ENCODE measurements at regions of chr6 and their contacts with region 1.

Region 1: DNA sequence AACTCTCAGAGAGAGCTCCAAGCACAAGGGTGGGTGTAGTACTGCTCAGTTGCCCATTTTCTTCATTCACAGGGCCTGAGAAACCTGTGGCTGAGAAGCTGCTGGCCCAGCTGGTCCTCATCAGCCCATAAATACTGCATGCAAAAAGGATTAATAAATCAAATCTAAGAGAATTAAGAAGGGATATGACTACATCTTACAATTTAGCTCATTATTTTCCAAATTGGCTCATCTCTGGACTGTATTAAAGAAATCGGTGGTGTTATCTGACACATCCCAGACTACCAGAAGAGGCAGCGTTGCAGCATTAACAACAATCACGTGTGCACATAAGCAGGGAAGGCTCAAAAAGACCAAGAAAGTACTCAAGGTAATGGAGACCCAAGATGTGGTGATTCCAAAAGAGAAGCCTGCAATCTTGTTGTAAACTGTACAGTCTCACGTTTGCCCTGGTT is 90.7 kb downstream of the CD24 start:
- DNase-seq: peak in 2 of 4 experiments; percentile 45 to 72
- ATAC-seq: peak; percentile 77
- H3K4me3 ChIP-seq: no peak overlapping the region
- H3K27ac ChIP-seq: peak overlapping the region; percentile 49; the same call in 2 of the 3 replicates
- H3K4me1 ChIP-seq: peaks cover 5 to 38% of the 10 kb centered on the region in 2 experiments
- H3K27me3 ChIP-seq: no peaks in the 10 kb centered on the region; a peak in 1 of 5 replicates
- CTCF ChIP-seq: peak; percentile 8 to 47 (median 29); a peak in 2 of 6 replicates
- EP300 ChIP-seq: no peak
- POLR2A ChIP-seq: no peak
- RAD21 ChIP-seq: peak in 1 of 2 experiments; percentile 53; a peak in 1 of 4 replicates

Region 2: DNA sequence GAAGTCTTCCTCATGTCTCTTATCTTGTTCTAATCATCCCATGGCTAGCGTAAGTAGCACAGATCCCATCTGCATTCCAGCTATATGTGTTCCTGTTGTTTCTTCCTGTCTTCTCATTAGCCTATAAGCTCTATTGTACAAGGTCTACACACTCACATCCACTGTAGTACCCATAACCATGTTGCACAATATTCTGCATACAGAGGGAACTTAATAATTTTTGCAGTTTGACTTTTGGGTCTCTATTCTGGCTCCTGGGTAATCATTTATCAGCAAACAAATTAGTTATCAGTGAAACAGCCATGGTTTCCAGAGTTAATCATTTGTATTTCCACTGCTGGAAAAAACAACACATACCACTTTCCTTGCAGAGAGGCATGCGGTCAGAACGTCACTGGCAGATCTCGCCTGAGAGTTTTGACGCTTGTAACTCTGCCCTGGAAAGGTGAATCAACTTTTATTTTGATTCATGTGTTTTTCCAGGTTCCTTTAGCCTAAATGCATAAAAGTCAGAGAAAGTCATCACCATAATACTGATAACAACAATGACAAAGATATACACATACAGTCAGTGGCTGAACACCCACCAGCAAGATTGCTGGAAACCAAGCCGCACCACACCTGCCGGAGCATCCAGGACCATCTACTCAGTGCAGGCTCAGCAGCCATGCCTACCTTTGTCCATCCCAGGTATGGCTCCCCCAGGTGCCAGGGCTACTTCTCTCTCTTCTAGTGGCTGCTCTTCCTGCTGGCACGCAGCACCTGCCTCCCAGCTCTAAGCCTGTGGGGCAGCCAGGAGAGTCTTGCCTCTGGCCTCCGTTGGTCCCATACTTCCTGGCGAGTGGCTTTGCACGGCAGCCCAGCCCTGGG is 96.3 kb before region 1 on chr6:
- CTCF ChIA-PET with region 1: no interaction called
- POLR2A ChIA-PET with region 1: no interaction called
- in situ Hi-C with region 1: no loop called
- intact Hi-C with region 1: no loop called
- DNase-seq: no peak
- ATAC-seq: no peak
- H3K4me3 ChIP-seq: no peak overlapping the region
- H3K27ac ChIP-seq: no peak overlapping the region
- H3K4me1 ChIP-seq: peaks cover 0 to 3% of the 10 kb centered on the region in 2 experiments; a peak in 3 of 5 replicates
- H3K27me3 ChIP-seq: peaks cover 0 to 5% of the 10 kb centered on the region in 2 experiments; a peak in 1 of 5 replicates
- CTCF ChIP-seq: no peak
- EP300 ChIP-seq: no peak
- POLR2A ChIP-seq: no peak
- RAD21 ChIP-seq: no peak

Region 3: DNA sequence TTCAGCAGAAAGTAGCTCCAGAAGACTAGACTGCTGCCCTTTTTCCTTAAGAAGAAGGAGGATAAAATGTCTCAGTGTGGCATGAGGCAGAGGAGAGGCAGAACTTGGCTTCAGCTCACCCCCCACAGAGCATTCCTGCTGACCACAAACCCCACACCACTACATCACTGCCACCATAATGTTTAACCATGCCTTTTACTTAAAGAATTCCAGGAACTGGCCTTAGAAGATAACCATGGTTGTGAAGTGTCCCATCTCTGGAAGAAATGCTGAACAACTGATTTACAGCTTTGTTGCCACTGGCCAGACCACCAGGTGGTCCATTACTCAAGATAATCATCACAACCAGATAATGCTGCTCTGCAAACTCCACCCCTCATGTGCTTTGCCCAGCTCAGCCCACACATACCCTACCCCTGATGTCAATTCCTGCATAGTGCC is 63.4 kb before region 1 on chr6:
- CTCF ChIA-PET with region 1: no interaction called
- POLR2A ChIA-PET with region 1: no interaction called
- in situ Hi-C with region 1: no loop called
- intact Hi-C with region 1: loop called (anchors 5 kb)
- DNase-seq: peak; percentile 31 to 77 (median 54)
- ATAC-seq: peak; percentile 84
- H3K4me3 ChIP-seq: no peak overlapping the region
- H3K27ac ChIP-seq: no peak overlapping the region
- H3K4me1 ChIP-seq: peaks cover 15 to 17% of the 10 kb centered on the region in 2 experiments; a peak in 4 of 5 replicates
- H3K27me3 ChIP-seq: no peaks in the 10 kb centered on the region
- CTCF ChIP-seq: no peak
- EP300 ChIP-seq: peak; percentile 64
- POLR2A ChIP-seq: no peak
- RAD21 ChIP-seq: no peak

Region 4: DNA sequence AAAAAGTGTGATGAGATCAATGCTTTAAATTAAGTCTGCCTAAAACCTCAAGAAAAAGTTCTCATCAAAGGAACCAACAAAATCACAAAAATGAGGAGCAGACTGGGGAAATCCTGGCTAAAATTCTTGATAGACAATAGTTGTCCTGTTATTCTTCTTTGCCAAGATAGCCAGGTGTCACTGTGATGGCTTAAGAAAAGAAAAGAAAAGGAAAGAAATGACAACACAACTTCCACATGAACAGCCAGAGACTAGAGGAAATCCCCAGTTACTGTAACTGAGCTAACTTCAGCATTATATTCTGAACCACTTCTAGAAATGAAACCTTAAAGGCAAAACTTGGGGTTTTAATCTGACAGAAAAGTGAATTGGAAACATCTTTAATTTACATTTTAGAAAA is 38.9 kb before region 1 on chr6:
- CTCF ChIA-PET with region 1: no interaction called
- POLR2A ChIA-PET with region 1: interaction called, 3 read pairs
- in situ Hi-C with region 1: no loop called
- intact Hi-C with region 1: loop called (anchors 5 kb)
- DNase-seq: no peak
- ATAC-seq: no peak
- H3K4me3 ChIP-seq: no peak overlapping the region
- H3K27ac ChIP-seq: no peak overlapping the region
- H3K4me1 ChIP-seq: peaks cover 4 to 37% of the 10 kb centered on the region in 2 experiments
- H3K27me3 ChIP-seq: no peaks in the 10 kb centered on the region
- CTCF ChIP-seq: no peak
- EP300 ChIP-seq: no peak
- POLR2A ChIP-seq: no peak
- RAD21 ChIP-seq: no peak

Region 5: GRCh38 chr6:106913676-106914280 is 29.9 kb after region 1 on chr6:
- CTCF ChIA-PET with region 1: no interaction called
- POLR2A ChIA-PET with region 1: no interaction called
- in situ Hi-C with region 1: no loop called
- intact Hi-C with region 1: no loop called
- DNase-seq: no peak
- ATAC-seq: no peak
- H3K4me3 ChIP-seq: no peak overlapping the region
- H3K27ac ChIP-seq: no peak overlapping the region
- H3K4me1 ChIP-seq: peaks cover 4 to 30% of the 10 kb centered on the region in 2 experiments; a peak in 4 of 5 replicates
- H3K27me3 ChIP-seq: no peaks in the 10 kb centered on the region
- CTCF ChIP-seq: no peak
- EP300 ChIP-seq: no peak
- POLR2A ChIP-seq: no peak
- RAD21 ChIP-seq: no peak

Measured in K562 (cell line).